Calu3 (cell line): ENCODE measurements at regions of chr5 and their contacts with region 1.

Region 1: GRCh38 chr5:74640450-74640953 is at the start of gene ENC1:
- DNase-seq: peak; percentile 94
- H3K4me3 Mint-ChIP-seq: peak within 1 kb of the TSS; percentile 92
- H3K27ac Mint-ChIP-seq: peak within 1 kb of the TSS; percentile 64
- H3K4me1 Mint-ChIP-seq: peaks cover 54% of the 10 kb centered on the region
- H3K27me3 Mint-ChIP-seq: no peaks in the 10 kb centered on the region
- CTCF ChIP-seq: peak; percentile 62
- total RNA-seq, gene ENC1: 91.6 and 100 TPM in 2 replicates

Region 2: GRCh38 chr5:73792687-73793320 is 847.7 kb before region 1 on chr5:
- CTCF ChIA-PET with region 1: no interaction called
- intact Hi-C with region 1: loop called (anchors 10 kb)
- DNase-seq: peak; percentile 84
- H3K4me3 Mint-ChIP-seq: no peak overlapping the region
- H3K27ac Mint-ChIP-seq: peak overlapping the region; percentile 47
- H3K4me1 Mint-ChIP-seq: peaks cover 62% of the 10 kb centered on the region
- H3K27me3 Mint-ChIP-seq: no peaks in the 10 kb centered on the region
- CTCF ChIP-seq: peak; percentile 98

Region 3: DNA sequence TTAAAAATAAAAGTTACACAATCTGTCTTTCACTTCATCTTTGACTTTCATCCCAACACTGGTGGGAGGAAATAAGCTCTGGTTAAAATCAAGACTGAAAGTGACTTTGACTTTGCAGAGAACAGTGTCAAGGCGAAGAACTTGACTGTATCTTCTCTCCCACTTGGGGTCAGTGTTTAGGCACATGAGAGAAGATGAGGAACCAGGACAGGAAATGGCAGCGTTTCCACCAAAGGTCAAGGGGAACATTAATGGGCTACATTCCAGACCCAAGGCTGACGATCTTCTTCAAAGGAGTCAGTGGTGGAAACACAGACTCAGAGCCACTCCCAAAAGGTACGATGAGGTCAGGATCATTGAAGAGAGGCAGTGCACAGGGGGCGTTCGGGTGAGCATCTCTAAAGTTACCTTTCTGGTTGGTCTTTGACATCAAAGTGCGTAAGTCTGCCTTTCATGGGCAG is 605.0 kb before region 1 on chr5:
- CTCF ChIA-PET with region 1: no interaction called
- intact Hi-C with region 1: loop called (anchors 1 kb)
- DNase-seq: peak; percentile 49
- H3K4me3 Mint-ChIP-seq: no peak overlapping the region
- H3K27ac Mint-ChIP-seq: no peak overlapping the region
- H3K4me1 Mint-ChIP-seq: peaks cover 15% of the 10 kb centered on the region
- H3K27me3 Mint-ChIP-seq: no peaks in the 10 kb centered on the region
- CTCF ChIP-seq: peak; percentile 40

Region 4: DNA sequence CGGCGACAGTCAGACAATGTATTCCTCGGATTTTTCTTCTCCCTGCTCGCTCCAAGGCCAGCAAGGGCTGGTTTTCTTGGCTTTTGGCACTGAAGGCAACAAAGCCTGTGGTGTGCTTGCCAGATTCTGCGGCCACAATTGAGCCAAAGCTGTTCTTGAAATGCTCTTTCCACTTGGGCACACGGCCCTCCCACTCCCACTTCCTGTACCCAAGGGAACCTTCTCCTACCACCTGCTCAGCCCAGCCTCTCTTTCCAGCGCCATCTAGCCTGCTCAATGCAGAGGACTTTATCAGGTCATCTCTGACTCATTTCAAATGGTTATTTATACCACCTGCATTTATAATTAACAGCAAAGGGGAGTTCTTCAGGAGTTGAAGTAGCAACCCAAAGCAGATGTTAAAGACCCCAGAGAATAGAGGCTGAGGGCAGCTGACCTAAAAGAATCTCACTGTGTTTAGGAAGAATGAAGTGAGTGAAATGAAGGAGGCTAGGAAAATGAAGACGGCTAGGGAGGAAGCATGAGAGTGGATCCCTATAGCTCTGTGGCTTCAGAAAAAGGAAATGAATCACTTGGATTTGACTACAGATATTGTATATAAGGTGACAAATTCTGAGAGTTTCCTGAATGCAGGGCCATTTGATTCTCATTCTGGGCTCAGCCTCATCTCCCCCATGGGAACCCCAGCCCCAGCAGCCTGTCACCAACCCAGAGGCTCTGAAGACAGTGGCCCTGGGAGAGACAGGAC is 439.0 kb before region 1 on chr5:
- CTCF ChIA-PET with region 1: interaction called, 3 read pairs
- intact Hi-C with region 1: loop called (anchors 5 kb)
- DNase-seq: peak; percentile 75
- H3K4me3 Mint-ChIP-seq: peak overlapping the region; percentile 48
- H3K27ac Mint-ChIP-seq: peak overlapping the region; percentile 91
- H3K4me1 Mint-ChIP-seq: peaks cover 49% of the 10 kb centered on the region
- H3K27me3 Mint-ChIP-seq: no peaks in the 10 kb centered on the region
- CTCF ChIP-seq: no peak

Region 5: DNA sequence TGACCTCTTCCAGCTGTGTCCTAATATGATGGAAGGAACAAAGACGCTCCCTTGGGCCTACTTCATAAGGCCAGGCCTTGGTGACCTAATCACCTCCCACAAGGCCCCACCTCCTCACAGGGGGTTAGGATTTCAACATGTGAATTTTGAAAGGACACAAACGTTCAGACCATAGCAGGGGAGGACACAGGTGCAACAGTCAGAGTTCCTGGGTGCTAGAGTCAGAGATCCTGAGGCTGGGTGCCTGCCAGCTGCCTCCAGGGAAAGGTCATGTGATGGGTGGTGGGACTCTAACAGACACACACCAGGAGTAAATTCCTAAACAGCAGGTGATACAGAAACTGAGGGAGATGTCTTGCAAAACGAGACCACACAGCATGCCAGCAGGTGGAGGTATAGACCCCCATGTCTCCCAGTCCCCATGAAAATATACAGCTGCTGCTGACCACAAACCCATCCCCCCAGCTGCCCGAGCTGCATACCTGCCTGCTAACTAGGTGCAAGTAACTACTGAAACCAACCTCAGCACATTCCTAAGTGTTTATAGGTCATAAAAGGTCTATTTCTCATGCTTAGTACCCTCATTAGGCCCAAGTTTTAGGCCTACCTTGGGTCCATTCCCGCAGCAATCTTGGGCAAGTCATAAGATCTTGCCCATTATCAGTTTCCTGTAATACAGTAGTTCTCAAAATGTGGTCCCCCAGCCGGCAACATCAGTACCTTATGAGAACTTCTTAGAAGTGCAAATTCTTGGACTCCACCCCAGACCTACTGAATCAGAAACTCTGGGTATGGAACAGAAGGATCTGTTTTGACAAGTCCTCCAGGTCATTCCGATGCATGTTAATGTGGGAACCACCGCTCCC is 245.4 kb before region 1 on chr5:
- CTCF ChIA-PET with region 1: interaction called, 30 read pairs
- intact Hi-C with region 1: no loop called
- DNase-seq: peak; percentile 88
- H3K4me3 Mint-ChIP-seq: no peak overlapping the region
- H3K27ac Mint-ChIP-seq: peak overlapping the region; percentile 80
- H3K4me1 Mint-ChIP-seq: peaks cover 61% of the 10 kb centered on the region
- H3K27me3 Mint-ChIP-seq: no peaks in the 10 kb centered on the region
- CTCF ChIP-seq: peak; percentile 33

Region 6: GRCh38 chr5:74589204-74590056 is 51.1 kb before region 1 on chr5:
- CTCF ChIA-PET with region 1: interaction called, 3 read pairs
- intact Hi-C with region 1: loop called (anchors 2 kb)
- DNase-seq: peak; percentile 37
- H3K4me3 Mint-ChIP-seq: peak overlapping the region; percentile 54
- H3K27ac Mint-ChIP-seq: peak overlapping the region; percentile 60
- H3K4me1 Mint-ChIP-seq: peaks cover 67% of the 10 kb centered on the region
- H3K27me3 Mint-ChIP-seq: no peaks in the 10 kb centered on the region
- CTCF ChIP-seq: no peak